CD4-positive, alpha-beta T cell (primary cell): ENCODE measurements at regions of chr17 and their contacts with region 1.

Region 1: GRCh38 chr17:22171631-22172030 is 479.3 kb downstream of the KCNJ18 start:
- DNase-seq: no peak
- ATAC-seq: no peak
- H3K4me3 ChIP-seq: no peak overlapping the region
- H3K4me3 Mint-ChIP-seq: no peak overlapping the region
- H3K27ac ChIP-seq: no peak overlapping the region
- H3K27ac Mint-ChIP-seq: no peak overlapping the region
- H3K4me1 ChIP-seq: no peaks in the 10 kb centered on the region
- H3K4me1 Mint-ChIP-seq: no peaks in the 10 kb centered on the region
- H3K27me3 ChIP-seq: no peaks in the 10 kb centered on the region
- H3K27me3 Mint-ChIP-seq: no peaks in the 10 kb centered on the region
- CTCF ChIP-seq: no peak

Region 2: DNA sequence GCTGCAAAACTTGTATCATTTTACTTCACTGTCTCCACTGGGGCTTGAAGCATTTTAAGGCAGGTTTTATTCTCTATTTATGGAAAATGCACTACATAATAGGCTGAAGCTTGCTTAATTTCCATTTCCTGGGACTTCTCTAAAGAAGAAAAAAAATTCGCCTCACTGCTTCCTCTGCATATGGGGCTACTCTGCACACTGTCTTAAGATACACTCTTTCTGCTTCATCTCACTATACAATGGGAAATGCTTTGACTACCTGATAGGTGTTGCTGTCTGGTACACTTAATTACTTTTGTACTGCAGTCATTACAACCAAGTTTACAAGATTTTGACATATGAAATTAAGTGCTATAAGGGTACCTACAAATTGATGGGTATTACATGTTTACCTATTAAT is 13.3 kb before region 1 on chr17:
- CTCF ChIA-PET with region 1: no interaction called
- POLR2A ChIA-PET with region 1: no interaction called
- intact Hi-C with region 1: no loop called
- DNase-seq: no peak
- ATAC-seq: no peak
- H3K4me3 ChIP-seq: no peak overlapping the region
- H3K4me3 Mint-ChIP-seq: no peak overlapping the region
- H3K27ac ChIP-seq: no peak overlapping the region
- H3K27ac Mint-ChIP-seq: no peak overlapping the region
- H3K4me1 ChIP-seq: no peaks in the 10 kb centered on the region
- H3K4me1 Mint-ChIP-seq: no peaks in the 10 kb centered on the region
- H3K27me3 ChIP-seq: no peaks in the 10 kb centered on the region
- H3K27me3 Mint-ChIP-seq: no peaks in the 10 kb centered on the region
- CTCF ChIP-seq: no peak

Region 3: DNA sequence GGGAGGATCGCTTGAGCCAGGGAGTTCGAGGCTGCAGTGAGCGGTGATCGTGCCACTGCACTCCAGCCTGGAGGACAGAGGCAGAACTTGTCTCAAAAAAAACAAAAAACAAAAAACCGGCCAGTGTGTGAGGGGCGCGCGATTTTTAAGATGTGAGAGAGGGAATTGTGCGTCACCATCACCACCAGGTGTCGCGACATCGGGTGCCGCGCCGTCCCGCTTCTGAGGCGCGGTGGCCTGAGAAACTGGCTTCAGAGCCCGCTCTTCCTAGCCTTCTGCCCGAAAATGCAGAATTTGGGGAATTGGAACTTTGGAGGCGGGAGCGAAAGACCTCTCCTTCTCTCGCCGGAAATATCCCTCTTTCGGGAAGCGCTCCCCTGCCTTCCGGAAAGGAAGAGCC is 45.5 kb after region 1 on chr17:
- CTCF ChIA-PET with region 1: no interaction called
- POLR2A ChIA-PET with region 1: no interaction called
- intact Hi-C with region 1: no loop called
- DNase-seq: no peak
- ATAC-seq: no peak
- H3K4me3 ChIP-seq: no peak overlapping the region
- H3K4me3 Mint-ChIP-seq: no peak overlapping the region
- H3K27ac ChIP-seq: no peak overlapping the region
- H3K27ac Mint-ChIP-seq: no peak overlapping the region
- H3K4me1 ChIP-seq: no peaks in the 10 kb centered on the region
- H3K4me1 Mint-ChIP-seq: no peaks in the 10 kb centered on the region
- H3K27me3 ChIP-seq: no peaks in the 10 kb centered on the region
- H3K27me3 Mint-ChIP-seq: no peaks in the 10 kb centered on the region
- CTCF ChIP-seq: no peak

Region 4: GRCh38 chr17:22233382-22233781 is 61.8 kb after region 1 on chr17:
- CTCF ChIA-PET with region 1: no interaction called
- POLR2A ChIA-PET with region 1: no interaction called
- intact Hi-C with region 1: loop called in 1 of 2 experiments (anchors 10 kb)
- DNase-seq: no peak
- ATAC-seq: no peak
- H3K4me3 ChIP-seq: no peak overlapping the region
- H3K4me3 Mint-ChIP-seq: no peak overlapping the region
- H3K27ac ChIP-seq: no peak overlapping the region
- H3K27ac Mint-ChIP-seq: no peak overlapping the region
- H3K4me1 ChIP-seq: no peaks in the 10 kb centered on the region
- H3K4me1 Mint-ChIP-seq: no peaks in the 10 kb centered on the region
- H3K27me3 ChIP-seq: no peaks in the 10 kb centered on the region
- H3K27me3 Mint-ChIP-seq: no peaks in the 10 kb centered on the region
- CTCF ChIP-seq: no peak